IMR-90 (cell line): ENCODE measurements at regions of chr6 and their contacts with region 1.

Region 1: DNA sequence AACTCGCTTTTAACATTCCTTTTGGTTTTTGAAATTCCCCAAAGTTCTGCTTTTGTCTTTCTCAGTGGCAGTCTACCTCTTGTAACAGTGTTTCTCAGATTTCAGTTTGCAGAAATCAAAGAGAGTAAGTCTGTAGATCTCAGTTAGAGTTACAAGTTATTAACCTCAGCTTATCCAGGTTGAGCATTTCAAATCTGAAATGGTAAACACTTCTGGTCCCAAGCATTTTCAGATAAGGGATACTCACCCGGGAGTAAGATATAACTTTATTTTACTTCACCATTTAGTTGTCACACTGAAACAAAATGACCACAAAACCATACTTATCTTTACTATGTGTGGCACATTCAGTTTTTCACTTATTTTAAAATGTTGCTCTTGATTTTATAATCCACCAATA is 9.8 kb downstream of the ZNF292 start:
- DNase-seq: no peak
- ATAC-seq: no peak
- H3K4me3 ChIP-seq: no peak overlapping the region
- H3K27ac ChIP-seq: no peak overlapping the region
- H3K4me1 ChIP-seq: peaks cover 10% of the 10 kb centered on the region
- H3K27me3 ChIP-seq: no peaks in the 10 kb centered on the region
- CTCF ChIP-seq: no peak
- POLR2A ChIP-seq: no peak
- RAD21 ChIP-seq: no peak

Region 2: DNA sequence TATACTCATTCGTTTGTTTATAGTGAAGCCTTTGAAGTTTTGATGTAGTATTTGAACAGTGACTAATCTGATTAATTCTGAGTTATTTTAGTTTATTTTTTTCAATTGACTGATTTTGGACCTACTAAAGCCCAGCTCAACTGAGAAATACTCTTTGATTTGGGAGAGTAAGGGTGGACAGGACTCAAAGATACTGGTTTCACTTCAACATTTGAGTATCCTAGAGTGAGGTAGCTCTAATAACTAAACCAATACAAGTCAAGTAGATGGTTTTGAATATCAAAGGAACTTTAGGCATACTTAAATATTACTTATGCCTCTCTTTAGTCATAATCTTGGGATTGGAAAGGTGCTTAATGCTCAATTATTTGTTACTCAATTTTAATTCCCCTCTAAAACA is 55.8 kb after region 1 on chr6:
- CTCF ChIA-PET with region 1: no interaction called
- POLR2A ChIA-PET with region 1: no interaction called
- dilution Hi-C with region 1: no loop called
- in situ Hi-C with region 1: no loop called
- intact Hi-C with region 1: loop called (anchors 5 kb)
- DNase-seq: no peak
- ATAC-seq: no peak
- H3K4me3 ChIP-seq: no peak overlapping the region
- H3K27ac ChIP-seq: no peak overlapping the region
- H3K4me1 ChIP-seq: no peaks in the 10 kb centered on the region
- H3K27me3 ChIP-seq: no peaks in the 10 kb centered on the region
- CTCF ChIP-seq: no peak
- POLR2A ChIP-seq: no peak
- RAD21 ChIP-seq: no peak